Right ventricle myocardium inferior (tissue), 1 donor: ENCODE measurements at regions of chr7 and their contacts with region 1.

Region 1: DNA sequence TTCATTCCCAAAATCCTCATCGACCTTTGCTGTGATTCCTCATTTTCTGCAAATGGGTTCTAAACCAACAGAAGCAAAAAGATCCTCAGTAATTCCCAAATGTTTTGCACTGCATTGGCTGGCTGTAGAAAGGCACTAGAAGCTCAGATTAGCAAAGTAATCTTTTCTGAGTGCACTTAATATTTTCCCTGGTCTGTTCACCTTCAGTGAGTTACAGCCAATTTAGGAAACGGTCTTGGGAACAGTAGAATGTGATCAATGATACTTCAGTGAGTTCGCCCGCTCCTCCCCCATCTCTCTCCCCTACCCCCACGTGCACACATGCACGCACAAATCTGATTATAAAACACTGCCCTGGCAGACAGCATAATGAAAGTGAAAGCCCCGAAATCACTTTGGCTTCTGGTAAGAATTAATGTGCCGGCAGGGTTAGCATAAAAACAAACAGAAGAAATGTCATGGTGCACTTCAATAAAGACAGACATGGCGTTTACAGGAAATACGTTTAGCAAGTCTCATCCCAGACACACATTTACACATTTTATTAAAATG is 201.3 kb upstream of the CDCA7L start:
- DNase-seq: no peak
- ATAC-seq: no peak

Region 2: DNA sequence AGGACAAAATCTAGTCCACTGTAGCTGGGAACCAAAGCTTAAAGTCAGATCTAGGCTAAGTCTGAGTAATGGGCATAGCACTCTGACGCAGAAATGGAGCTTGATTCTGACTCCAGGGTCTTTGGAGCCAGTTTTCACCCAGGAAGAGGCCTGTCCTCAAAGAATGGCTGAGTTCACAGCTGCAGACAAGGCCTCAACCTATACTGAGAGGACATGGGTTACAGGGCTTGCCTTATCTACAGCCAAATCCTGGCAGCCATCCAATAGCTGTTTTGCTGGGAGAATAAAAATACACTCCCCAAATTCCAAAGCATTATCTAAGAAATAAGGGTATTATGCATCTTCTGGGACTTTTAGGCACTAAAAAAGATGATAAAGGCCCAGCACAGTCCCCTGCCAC is 55.1 kb after region 1 on chr7:
- intact Hi-C with region 1: loop called (anchors 10 kb)
- DNase-seq: no peak
- ATAC-seq: no peak